CD4-positive, alpha-beta T cell (primary cell): ENCODE measurements at regions of chr3 and their contacts with region 1.

Region 1: DNA sequence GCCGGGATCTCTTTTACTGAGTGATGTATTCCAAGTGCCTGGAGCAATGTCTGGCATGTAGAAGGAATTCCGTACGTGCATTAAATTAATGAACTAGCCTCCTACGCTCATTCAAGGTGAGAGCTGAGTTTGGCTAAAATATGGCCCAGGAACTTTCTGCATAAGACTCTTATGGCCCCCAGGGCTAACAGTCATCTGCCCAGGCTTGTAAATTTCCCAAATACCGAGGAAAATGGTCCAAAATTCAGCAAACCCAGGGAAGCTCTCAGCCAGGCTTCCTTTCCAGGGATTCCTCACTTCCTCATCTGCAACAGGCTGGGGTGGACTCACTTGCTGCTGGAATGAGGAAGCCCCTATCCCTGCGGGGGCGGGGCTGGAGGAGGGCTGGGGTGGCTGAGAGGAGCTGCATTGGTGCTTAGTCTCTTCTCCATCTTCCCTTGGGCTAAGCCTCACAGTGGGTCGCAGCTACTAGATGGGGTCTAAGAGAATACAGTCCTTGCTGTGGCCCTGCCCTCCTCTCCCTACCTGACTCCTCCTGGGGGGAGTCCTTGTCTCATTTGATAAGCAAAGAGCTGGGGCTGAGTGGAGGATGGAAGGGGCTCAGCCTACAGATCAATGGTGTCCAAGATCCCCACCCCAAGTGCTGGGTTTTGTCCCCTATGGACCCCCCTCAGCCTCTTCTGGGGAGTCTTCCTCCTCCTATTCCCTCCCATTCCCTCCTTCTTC is 28.5 kb upstream of the APOD start:
- DNase-seq: no peak
- ATAC-seq: no peak
- H3K4me3 ChIP-seq: no peak overlapping the region
- H3K4me3 Mint-ChIP-seq: no peak overlapping the region
- H3K27ac ChIP-seq: no peak overlapping the region
- H3K27ac Mint-ChIP-seq: no peak overlapping the region
- H3K4me1 ChIP-seq: peaks cover 28% of the 10 kb centered on the region
- H3K4me1 Mint-ChIP-seq: peaks cover 54% of the 10 kb centered on the region
- H3K27me3 ChIP-seq: no peaks in the 10 kb centered on the region
- H3K27me3 Mint-ChIP-seq: no peaks in the 10 kb centered on the region
- CTCF ChIP-seq: no peak

Region 2: DNA sequence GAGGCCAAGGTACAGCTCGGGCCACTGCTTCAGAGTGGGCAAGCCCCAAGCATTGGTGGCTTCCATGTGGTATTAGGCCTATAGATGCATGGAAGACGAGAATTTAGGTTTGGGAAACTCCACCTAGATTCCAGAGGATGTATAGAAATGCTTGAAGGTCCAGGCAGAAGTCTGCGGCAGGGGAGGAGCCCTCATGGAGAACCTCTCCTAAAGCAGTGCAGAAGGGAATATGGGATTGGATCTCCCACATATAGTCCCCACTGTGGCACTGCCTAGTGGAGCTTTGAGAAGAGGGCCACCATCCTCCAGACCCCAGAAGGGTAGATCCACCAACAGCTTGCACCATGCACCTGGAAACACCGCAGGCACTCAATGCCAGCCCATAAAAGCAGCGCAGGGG is 293.2 kb before region 1 on chr3:
- CTCF ChIA-PET with region 1: no interaction called
- POLR2A ChIA-PET with region 1: no interaction called
- intact Hi-C with region 1: no loop called
- DNase-seq: no peak
- ATAC-seq: no peak
- H3K4me3 ChIP-seq: no peak overlapping the region
- H3K4me3 Mint-ChIP-seq: no peak overlapping the region
- H3K27ac ChIP-seq: no peak overlapping the region
- H3K27ac Mint-ChIP-seq: no peak overlapping the region
- H3K4me1 ChIP-seq: no peaks in the 10 kb centered on the region
- H3K4me1 Mint-ChIP-seq: peaks cover 23% of the 10 kb centered on the region
- H3K27me3 ChIP-seq: no peaks in the 10 kb centered on the region
- H3K27me3 Mint-ChIP-seq: no peaks in the 10 kb centered on the region
- CTCF ChIP-seq: no peak

Region 3: GRCh38 chr3:195566814-195567213 is 45.4 kb before region 1 on chr3:
- CTCF ChIA-PET with region 1: no interaction called
- POLR2A ChIA-PET with region 1: interaction called, 3 read pairs
- intact Hi-C with region 1: loop called in 1 of 2 experiments (anchors 5 kb)
- DNase-seq: no peak
- ATAC-seq: no peak
- H3K4me3 ChIP-seq: no peak overlapping the region
- H3K4me3 Mint-ChIP-seq: no peak overlapping the region
- H3K27ac ChIP-seq: no peak overlapping the region
- H3K27ac Mint-ChIP-seq: no peak overlapping the region
- H3K4me1 ChIP-seq: no peaks in the 10 kb centered on the region
- H3K4me1 Mint-ChIP-seq: peaks cover 10% of the 10 kb centered on the region
- H3K27me3 ChIP-seq: no peaks in the 10 kb centered on the region
- H3K27me3 Mint-ChIP-seq: no peaks in the 10 kb centered on the region
- CTCF ChIP-seq: no peak

Region 4: GRCh38 chr3:195716865-195717210 is 104.6 kb after region 1 on chr3:
- CTCF ChIA-PET with region 1: no interaction called
- POLR2A ChIA-PET with region 1: no interaction called
- intact Hi-C with region 1: no loop called
- DNase-seq: no peak
- ATAC-seq: no peak
- H3K4me3 ChIP-seq: no peak overlapping the region
- H3K4me3 Mint-ChIP-seq: no peak overlapping the region
- H3K27ac ChIP-seq: no peak overlapping the region
- H3K27ac Mint-ChIP-seq: no peak overlapping the region
- H3K4me1 ChIP-seq: peaks cover 3% of the 10 kb centered on the region
- H3K4me1 Mint-ChIP-seq: no peaks in the 10 kb centered on the region
- H3K27me3 ChIP-seq: no peaks in the 10 kb centered on the region
- H3K27me3 Mint-ChIP-seq: no peaks in the 10 kb centered on the region
- CTCF ChIP-seq: no peak

Region 5: DNA sequence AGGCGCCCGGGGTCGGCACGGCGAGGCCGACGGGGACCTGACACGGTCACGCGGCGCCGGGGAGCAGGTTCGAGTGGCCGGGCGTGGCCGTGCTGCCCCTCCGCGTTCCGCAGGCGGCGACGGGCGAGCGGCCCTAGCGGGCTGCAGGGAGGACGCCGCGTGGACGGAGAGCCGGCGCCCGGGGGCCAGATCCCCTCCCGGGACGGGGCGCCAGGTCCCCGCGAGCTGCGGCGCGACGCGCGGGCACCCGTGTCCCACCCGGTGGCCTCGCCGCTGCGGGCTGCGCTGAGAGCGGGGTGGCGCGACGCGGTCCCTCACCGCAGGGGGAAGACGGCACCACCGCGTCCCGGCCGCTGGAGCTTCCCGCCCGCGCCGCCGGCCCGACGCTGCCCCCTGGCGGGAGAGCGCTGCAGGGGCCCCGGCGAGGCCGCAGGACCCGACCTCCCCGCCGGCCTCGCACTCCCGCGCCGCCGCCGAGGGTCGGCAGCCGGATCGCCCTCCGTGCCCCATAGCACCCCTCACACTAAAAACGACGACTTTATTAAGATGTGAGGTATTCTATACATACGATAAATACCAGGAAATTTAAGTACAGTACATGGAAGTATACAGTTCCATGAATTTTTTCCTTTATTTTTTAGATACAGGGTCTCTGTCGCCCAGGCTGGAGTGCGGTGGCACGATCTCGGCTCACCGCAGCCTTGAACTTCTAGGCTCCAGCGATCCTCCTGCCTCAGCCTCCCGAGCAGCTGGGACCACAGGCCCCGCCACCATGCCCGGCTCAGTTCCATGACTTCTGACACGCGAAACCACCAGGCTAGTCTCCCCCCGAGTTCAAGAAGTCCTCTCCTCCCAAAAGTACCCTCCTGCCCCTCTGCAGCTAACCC is 1357.7 kb after region 1 on chr3:
- CTCF ChIA-PET with region 1: no interaction called
- POLR2A ChIA-PET with region 1: no interaction called
- intact Hi-C with region 1: no loop called
- DNase-seq: peak in 13 of 14 experiments; percentile 37 to 89 (median 56)
- ATAC-seq: peak; percentile 70
- H3K4me3 ChIP-seq: peak overlapping the region; percentile 52
- H3K4me3 Mint-ChIP-seq: peak overlapping the region; percentile 85
- H3K27ac ChIP-seq: no peak overlapping the region
- H3K27ac Mint-ChIP-seq: peak overlapping the region; percentile 51
- H3K4me1 ChIP-seq: peaks cover 11% of the 10 kb centered on the region
- H3K4me1 Mint-ChIP-seq: peaks cover 11% of the 10 kb centered on the region
- H3K27me3 ChIP-seq: peaks cover 0 to 6% of the 10 kb centered on the region in 2 experiments
- H3K27me3 Mint-ChIP-seq: peaks cover 19% of the 10 kb centered on the region
- CTCF ChIP-seq: peak; percentile 61